ENCODE measurements at regions of chr14 and their contacts with region 1.

Region 1: GRCh38 chr14:22570132-22570949 is 18.7 kb downstream of the DAD1 start:
- DNase-seq: peak; percentile 91
- H3K4me3 Mint-ChIP-seq: peak overlapping the region; percentile 80
- H3K27ac Mint-ChIP-seq: peak overlapping the region; percentile 99
- H3K4me1 Mint-ChIP-seq: peaks cover 74% of the 10 kb centered on the region
- H3K27me3 Mint-ChIP-seq: no peaks in the 10 kb centered on the region

Region 2: GRCh38 chr14:21912367-21912766 is 658.0 kb before region 1 on chr14:
- CTCF ChIA-PET with region 1: interaction called, 29 read pairs
- POLR2A ChIA-PET with region 1: no interaction called
- intact Hi-C with region 1: no loop called
- DNase-seq: no peak
- H3K4me3 Mint-ChIP-seq: no peak overlapping the region
- H3K27ac Mint-ChIP-seq: peak overlapping the region; percentile 19
- H3K4me1 Mint-ChIP-seq: peaks cover 33% of the 10 kb centered on the region
- H3K27me3 Mint-ChIP-seq: no peaks in the 10 kb centered on the region

Region 3: GRCh38 chr14:21997300-21997699 is 573.0 kb before region 1 on chr14:
- CTCF ChIA-PET with region 1: interaction called, 14 read pairs
- POLR2A ChIA-PET with region 1: interaction called, 4 read pairs
- intact Hi-C with region 1: no loop called
- DNase-seq: peak; percentile 54
- H3K4me3 Mint-ChIP-seq: peak overlapping the region; percentile 78
- H3K27ac Mint-ChIP-seq: peak overlapping the region; percentile 91
- H3K4me1 Mint-ChIP-seq: peaks cover 11% of the 10 kb centered on the region
- H3K27me3 Mint-ChIP-seq: no peaks in the 10 kb centered on the region

Region 4: DNA sequence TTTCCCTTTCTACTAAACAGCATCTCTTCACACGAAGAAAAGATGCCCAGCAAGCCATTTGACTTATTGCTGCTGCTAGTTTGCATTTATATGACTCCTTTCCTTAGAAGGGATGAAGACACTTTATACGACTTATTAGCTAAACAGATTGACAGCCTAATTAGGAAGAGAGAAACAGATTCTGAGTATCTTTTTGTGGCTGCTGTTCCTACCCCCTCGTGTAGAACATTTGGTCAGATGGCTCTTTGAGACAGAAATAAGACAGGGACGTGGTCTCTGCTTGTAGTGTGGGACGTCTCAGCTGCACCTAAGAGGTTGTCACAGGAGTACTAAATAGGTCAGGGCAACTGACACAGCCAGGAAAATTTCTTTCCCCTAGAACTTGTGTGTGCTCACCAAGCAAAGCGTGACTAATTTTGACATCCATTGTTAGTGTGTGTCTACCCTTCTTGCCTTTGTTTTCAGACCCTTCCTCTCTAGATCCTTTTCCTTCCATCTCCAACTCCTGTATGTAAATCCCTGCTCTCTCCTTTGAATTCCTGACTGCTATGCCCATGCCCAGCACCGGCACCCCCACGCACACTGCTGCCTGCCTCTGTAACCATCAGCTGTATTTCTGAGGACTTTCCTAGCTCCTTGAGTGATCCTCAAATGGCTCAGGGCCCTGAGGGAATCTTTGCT is 64.5 kb before region 1 on chr14:
- CTCF ChIA-PET with region 1: interaction called, 15 read pairs
- POLR2A ChIA-PET with region 1: interaction called, 19 read pairs
- intact Hi-C with region 1: no loop called
- DNase-seq: no peak
- H3K4me3 Mint-ChIP-seq: peak overlapping the region; percentile 79
- H3K27ac Mint-ChIP-seq: peak overlapping the region; percentile 98
- H3K4me1 Mint-ChIP-seq: peaks cover 35% of the 10 kb centered on the region
- H3K27me3 Mint-ChIP-seq: no peaks in the 10 kb centered on the region

Region 5: DNA sequence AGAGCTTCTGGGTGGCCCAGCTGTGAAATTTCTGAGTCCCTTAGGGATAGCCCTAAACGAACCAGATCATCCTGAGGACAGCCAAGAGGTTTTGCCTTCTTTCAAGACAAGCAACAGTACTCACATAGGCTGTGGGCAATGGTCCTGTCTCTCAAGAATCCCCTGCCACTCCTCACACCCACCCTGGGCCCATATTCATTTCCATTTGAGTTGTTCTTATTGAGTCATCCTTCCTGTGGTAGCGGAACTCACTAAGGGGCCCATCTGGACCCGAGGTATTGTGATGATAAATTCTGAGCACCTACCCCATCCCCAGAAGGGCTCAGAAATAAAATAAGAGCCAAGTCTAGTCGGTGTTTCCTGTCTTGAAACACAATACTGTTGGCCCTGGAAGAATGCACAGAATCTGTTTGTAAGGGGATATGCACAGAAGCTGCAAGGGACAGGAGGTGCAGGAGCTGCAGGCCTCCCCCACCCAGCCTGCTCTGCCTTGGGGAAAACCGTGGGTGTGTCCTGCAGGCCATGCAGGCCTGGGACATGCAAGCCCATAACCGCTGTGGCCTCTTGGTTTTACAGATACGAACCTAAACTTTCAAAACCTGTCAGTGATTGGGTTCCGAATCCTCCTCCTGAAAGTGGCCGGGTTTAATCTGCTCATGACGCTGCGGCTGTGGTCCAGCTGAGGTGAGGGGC is 20.2 kb before region 1 on chr14:
- CTCF ChIA-PET with region 1: interaction called, 273 read pairs
- POLR2A ChIA-PET with region 1: interaction called, 77 read pairs
- intact Hi-C with region 1: no loop called
- DNase-seq: peak; percentile 88
- H3K4me3 Mint-ChIP-seq: peak overlapping the region; percentile 80
- H3K27ac Mint-ChIP-seq: peak overlapping the region; percentile 99
- H3K4me1 Mint-ChIP-seq: peaks cover 94% of the 10 kb centered on the region
- H3K27me3 Mint-ChIP-seq: no peaks in the 10 kb centered on the region

Region 6: DNA sequence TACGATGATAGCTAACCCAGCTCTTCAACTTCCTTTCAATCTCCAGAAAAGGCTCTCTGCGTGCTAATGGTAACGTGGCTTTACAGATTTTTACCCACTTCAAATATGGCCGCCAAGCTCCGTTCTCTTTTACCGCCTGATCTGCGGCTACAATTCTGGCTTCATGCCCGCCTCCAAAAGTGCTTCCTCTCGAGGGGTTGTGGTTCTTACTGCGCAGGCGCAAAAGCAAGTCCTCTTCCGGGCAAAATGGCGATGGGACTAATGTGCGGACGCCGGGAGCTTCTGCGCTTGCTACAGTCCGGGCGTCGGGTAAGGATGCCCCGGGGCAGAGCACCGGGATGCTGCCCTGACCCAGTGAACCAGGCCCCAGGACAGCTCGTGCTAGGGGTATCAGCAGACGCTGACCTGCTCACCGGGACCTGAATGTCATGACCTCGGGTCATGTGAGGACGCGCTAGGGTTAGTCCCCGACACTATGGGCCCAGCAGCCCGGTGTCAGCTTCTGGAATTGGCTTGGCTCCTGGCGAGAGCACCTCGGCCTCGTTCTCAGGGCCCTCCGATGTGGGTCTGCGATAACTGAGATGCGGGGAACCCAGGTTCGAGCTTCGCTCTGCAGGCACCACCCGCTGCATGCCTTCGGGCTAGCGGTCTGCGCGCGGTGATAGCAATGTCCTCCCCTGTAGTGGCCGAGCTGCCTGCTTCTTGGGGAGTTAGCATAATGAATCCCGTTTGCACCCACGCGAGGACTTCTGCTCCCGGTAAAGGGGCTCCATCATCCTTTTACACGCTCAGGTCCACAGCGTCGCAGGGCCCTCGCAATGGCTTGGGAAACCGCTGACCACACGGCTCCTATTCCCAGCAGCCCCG is 196.3 kb after region 1 on chr14 and contains the start of gene OXA1L:
- CTCF ChIA-PET with region 1: interaction called, 34 read pairs
- POLR2A ChIA-PET with region 1: no interaction called
- intact Hi-C with region 1: loop called (anchors 5 kb)
- DNase-seq: peak; percentile 98
- H3K4me3 Mint-ChIP-seq: peak within 1 kb of the TSS; percentile 94
- H3K27ac Mint-ChIP-seq: peak within 1 kb of the TSS; percentile 98
- H3K4me1 Mint-ChIP-seq: peaks cover 34% of the 10 kb centered on the region
- H3K27me3 Mint-ChIP-seq: peaks cover 2% of the 10 kb centered on the region
- total RNA-seq, gene OXA1L: 131 to 136 TPM

Region 7: DNA sequence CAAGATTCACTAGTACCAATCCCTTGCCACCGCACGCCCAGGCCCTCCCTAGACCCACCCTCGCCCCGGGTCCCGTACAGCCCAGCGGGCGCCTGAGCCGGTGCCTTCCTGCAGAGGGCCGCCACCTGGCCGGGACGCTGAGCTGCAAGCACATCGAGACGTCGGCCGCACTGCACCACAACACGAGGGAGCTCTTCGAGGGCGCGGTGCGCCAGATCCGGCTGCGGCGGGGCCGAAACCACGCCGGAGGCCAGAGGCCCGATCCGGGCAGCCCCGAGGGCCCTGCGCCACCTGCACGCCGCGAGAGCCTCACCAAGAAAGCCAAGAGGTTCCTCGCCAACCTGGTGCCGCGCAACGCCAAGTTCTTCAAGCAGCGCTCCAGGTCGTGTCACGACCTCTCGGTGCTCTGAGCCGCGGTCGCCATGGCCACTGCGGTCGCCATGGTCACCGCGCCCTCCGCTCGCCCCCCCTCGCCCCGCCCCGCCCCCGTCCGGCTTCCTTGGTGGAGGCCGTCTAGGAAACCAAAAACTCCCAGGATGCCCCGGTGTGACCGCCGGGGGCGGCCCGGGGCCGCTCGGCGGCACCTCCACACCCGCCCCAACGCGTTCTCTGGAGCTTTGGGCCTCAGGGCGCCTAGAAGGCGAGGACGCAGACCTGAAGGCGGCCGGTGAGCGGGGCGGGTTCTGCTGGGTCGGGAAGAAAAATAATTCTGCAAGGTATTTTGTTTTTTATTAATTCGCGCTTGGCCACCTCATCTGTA is 316.3 kb after region 1 on chr14:
- CTCF ChIA-PET with region 1: interaction called, 10 read pairs
- POLR2A ChIA-PET with region 1: no interaction called
- intact Hi-C with region 1: no loop called
- DNase-seq: peak; percentile 91
- H3K4me3 Mint-ChIP-seq: peak overlapping the region; percentile 92
- H3K27ac Mint-ChIP-seq: peak overlapping the region; percentile 88
- H3K4me1 Mint-ChIP-seq: peaks cover 57% of the 10 kb centered on the region
- H3K27me3 Mint-ChIP-seq: no peaks in the 10 kb centered on the region